Heart right ventricle (tissue), 16 donors: ENCODE measurements at regions of chr19 and their contacts with region 1.

Region 1: GRCh38 chr19:39539519-39540332 is at the start of gene EID2:
- DNase-seq: peak; percentile 95 to 96
- ATAC-seq: peak; percentile 97 to 99 (median 99)
- H3K4me3 ChIP-seq: peak within 1 kb of the TSS; percentile 47 to 94 (median 77)
- H3K27ac ChIP-seq: peak within 1 kb of the TSS; percentile 90 to 98 (median 96)
- H3K4me1 ChIP-seq: peaks cover 0 to 32% (median 23%) of the 10 kb centered on the region in 9 donors
- H3K27me3 ChIP-seq: no peaks in the 10 kb centered on the region
- CTCF ChIP-seq: peak; percentile 74 to 94 (median 87)
- total RNA-seq, gene EID2: 9.0 to 15.5 (median 11.4) TPM

Region 2: GRCh38 chr19:39083983-39084731 is 455.6 kb before region 1 on chr19 and contains the start of gene ACP7:
- intact Hi-C with region 1: no loop called
- DNase-seq: no peak
- ATAC-seq: peak in 1 of 8 donors; percentile 26
- H3K4me3 ChIP-seq: peak within 1 kb of the TSS in 3 of 10 donors; percentile 1 to 30 (median 8)
- H3K27ac ChIP-seq: no peak within 1 kb of the TSS
- H3K4me1 ChIP-seq: peaks cover 0 to 19% (median 13%) of the 10 kb centered on the region in 9 donors
- H3K27me3 ChIP-seq: peaks cover 9 to 98% (median 89%) of the 10 kb centered on the region in 7 donors
- CTCF ChIP-seq: no peak
- total RNA-seq, gene ACP7: not detected

Region 3: GRCh38 chr19:39397360-39398296 is 142.1 kb before region 1 on chr19:
- intact Hi-C with region 1: loop called in 4 of 10 experiments (anchors 5 kb)
- DNase-seq: peak; percentile 88 to 93
- ATAC-seq: peak; percentile 77 to 87 (median 84)
- H3K4me3 ChIP-seq: peak overlapping the region in 3 of 10 donors; percentile 3 to 28 (median 21)
- H3K27ac ChIP-seq: peak overlapping the region; percentile 32 to 97 (median 78)
- H3K4me1 ChIP-seq: peaks cover 12 to 59% (median 31%) of the 10 kb centered on the region in 9 donors
- H3K27me3 ChIP-seq: no peaks in the 10 kb centered on the region
- CTCF ChIP-seq: peak; percentile 95 to 99 (median 98)

Region 4: DNA sequence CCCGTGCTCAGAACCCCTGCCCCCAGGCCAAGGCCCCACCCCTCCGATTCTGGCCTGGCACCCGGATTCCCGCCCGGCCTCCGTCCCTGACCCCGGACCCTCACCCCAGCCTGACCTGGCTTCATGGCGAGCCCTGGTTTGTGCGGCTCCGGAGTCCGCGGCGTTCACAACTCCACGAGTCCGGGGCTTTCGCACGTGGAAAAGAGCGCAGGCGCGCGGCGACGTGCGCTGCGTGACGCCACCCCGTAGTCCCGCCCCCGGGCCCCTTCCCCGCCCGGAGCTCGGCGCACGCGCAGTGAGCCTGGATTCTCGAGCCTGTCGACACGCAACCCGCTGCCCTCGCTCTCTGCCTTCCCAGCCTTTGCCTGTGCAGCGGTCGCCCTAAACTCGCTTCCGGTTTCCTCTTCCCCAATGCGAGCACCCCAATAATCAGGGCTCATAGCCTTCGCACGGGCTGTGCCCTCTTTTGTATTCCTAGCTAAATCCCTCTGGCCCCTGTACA is 306.5 kb after region 1 on chr19 and contains the start of gene FBL:
- intact Hi-C with region 1: loop called in 1 of 10 experiments (anchors 10 kb)
- DNase-seq: peak; percentile 94 to 99
- ATAC-seq: peak; percentile 97 to 99 (median 98)
- H3K4me3 ChIP-seq: peak within 1 kb of the TSS; percentile 53 to 97 (median 78)
- H3K27ac ChIP-seq: peak within 1 kb of the TSS; percentile 49 to 91 (median 84)
- H3K4me1 ChIP-seq: peaks cover 4 to 54% (median 46%) of the 10 kb centered on the region in 9 donors
- H3K27me3 ChIP-seq: no peaks in the 10 kb centered on the region
- CTCF ChIP-seq: no peak
- total RNA-seq, gene FBL: 52.7 to 95.4 (median 67.4) TPM